ENCODE measurements at regions of chr9 and their contacts with region 1.

Region 1: GRCh38 chr9:26946753-26947727 is at the start of gene PLAA:
- DNase-seq: peak; percentile 93
- ATAC-seq: peak; percentile 96
- H3K4me3 Mint-ChIP-seq: peak within 1 kb of the TSS; percentile 88
- H3K27ac Mint-ChIP-seq: peak within 1 kb of the TSS; percentile 99
- H3K4me1 Mint-ChIP-seq: peaks cover 48% of the 10 kb centered on the region
- H3K27me3 Mint-ChIP-seq: peaks cover 3% of the 10 kb centered on the region
- total RNA-seq, gene PLAA: 30.9 to 36.5 TPM

Region 2: GRCh38 chr9:26919698-26920097 is 27.3 kb before region 1 on chr9:
- CTCF ChIA-PET with region 1: no interaction called
- POLR2A ChIA-PET with region 1: interaction called, 10 read pairs
- intact Hi-C with region 1: no loop called
- DNase-seq: no peak
- ATAC-seq: no peak
- H3K4me3 Mint-ChIP-seq: no peak overlapping the region
- H3K27ac Mint-ChIP-seq: no peak overlapping the region
- H3K4me1 Mint-ChIP-seq: no peaks in the 10 kb centered on the region
- H3K27me3 Mint-ChIP-seq: no peaks in the 10 kb centered on the region

Region 3: DNA sequence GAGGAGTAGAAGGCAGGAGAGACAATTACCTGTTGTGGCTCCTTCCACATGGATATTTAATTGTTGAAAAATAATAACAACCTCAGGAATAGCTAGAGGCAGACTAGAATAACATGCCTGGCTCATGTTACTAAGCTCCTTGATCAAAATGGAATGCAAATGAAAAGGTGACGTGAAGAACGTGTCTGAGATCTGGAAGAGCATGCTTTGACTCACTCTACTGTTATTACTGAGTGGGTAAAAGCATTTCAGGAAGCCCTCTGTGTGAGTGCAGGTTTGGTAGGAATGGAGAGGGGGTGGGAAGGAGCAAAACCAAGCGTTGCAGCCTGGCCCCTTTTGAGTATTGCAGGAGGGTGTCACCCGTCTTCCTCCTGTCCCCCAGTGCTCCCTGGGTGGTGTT is 265.2 kb after region 1 on chr9:
- CTCF ChIA-PET with region 1: no interaction called
- POLR2A ChIA-PET with region 1: no interaction called
- intact Hi-C with region 1: no loop called
- DNase-seq: no peak
- ATAC-seq: no peak
- H3K4me3 Mint-ChIP-seq: no peak overlapping the region
- H3K27ac Mint-ChIP-seq: no peak overlapping the region
- H3K4me1 Mint-ChIP-seq: no peaks in the 10 kb centered on the region
- H3K27me3 Mint-ChIP-seq: no peaks in the 10 kb centered on the region